ENCODE measurements at regions of chr21 and their contacts with region 1.

Region 1: DNA sequence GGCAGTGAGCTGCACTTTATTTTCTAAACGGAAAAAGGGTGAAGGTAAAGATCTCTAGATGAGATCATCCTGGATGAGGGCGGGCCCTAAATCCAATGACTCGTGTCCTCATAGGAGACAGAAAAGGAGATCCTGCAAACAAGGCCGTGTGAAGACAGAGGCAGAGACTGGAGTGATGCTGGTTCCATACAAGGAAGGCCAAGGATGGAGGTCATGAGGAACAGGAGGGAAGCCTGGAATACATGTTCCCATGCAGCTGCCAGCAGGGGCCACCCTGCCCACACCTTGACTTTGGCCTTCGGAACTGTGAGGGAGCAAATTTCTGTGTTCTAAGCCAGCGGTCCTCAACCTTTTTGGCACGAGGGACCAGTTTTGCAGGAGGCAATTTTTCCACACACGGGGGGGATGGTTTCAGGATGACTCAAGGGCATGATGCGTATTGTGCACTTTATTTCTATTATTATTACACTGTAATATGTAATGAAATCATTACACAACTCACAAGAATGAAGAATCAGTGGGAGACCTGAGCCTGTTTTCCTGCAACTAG is 94.3 kb downstream of the PSMG1 start:
- DNase-seq: peak in 3 of 5 donors; percentile 48 to 75 (median 56)
- ATAC-seq: peak in 3 of 4 donors; percentile 47 to 68 (median 48)
- H3K4me3 ChIP-seq: no peak overlapping the region
- H3K27ac ChIP-seq: peak overlapping the region in 9 of 12 donors; percentile 82 to 100 (median 93)
- H3K4me1 ChIP-seq: peaks cover 0 to 76% (median 30%) of the 10 kb centered on the region in 12 donors
- H3K27me3 ChIP-seq: no peaks in the 10 kb centered on the region
- CTCF ChIP-seq: peak in 5 of 12 donors; percentile 16 to 45 (median 27)
- POLR2A ChIP-seq: no peak

Region 2: GRCh38 chr21:38958940-38959691 is 129.8 kb before region 1 on chr21:
- intact Hi-C with region 1: loop called in 1 of 10 experiments (anchors 5 kb)
- DNase-seq: peak in 4 of 5 donors; percentile 34 to 50 (median 46)
- ATAC-seq: peak; percentile 31 to 85 (median 76)
- H3K4me3 ChIP-seq: no peak overlapping the region
- H3K27ac ChIP-seq: peak overlapping the region in 11 of 12 donors; percentile 25 to 82 (median 64)
- H3K4me1 ChIP-seq: peaks cover 0 to 46% (median 25%) of the 10 kb centered on the region in 12 donors
- H3K27me3 ChIP-seq: no peaks in the 10 kb centered on the region
- CTCF ChIP-seq: no peak
- POLR2A ChIP-seq: no peak

Region 3: GRCh38 chr21:39159342-39160063 is 70.6 kb after region 1 on chr21:
- intact Hi-C with region 1: no loop called
- DNase-seq: no peak
- ATAC-seq: no peak
- H3K4me3 ChIP-seq: no peak overlapping the region
- H3K27ac ChIP-seq: no peak overlapping the region
- H3K4me1 ChIP-seq: no peaks in the 10 kb centered on the region
- H3K27me3 ChIP-seq: no peaks in the 10 kb centered on the region
- CTCF ChIP-seq: no peak
- POLR2A ChIP-seq: no peak

Measured in heart left ventricle (tissue), 16 donors.